ENCODE measurements at regions of chr13 and their contacts with region 1.

Region 1: DNA sequence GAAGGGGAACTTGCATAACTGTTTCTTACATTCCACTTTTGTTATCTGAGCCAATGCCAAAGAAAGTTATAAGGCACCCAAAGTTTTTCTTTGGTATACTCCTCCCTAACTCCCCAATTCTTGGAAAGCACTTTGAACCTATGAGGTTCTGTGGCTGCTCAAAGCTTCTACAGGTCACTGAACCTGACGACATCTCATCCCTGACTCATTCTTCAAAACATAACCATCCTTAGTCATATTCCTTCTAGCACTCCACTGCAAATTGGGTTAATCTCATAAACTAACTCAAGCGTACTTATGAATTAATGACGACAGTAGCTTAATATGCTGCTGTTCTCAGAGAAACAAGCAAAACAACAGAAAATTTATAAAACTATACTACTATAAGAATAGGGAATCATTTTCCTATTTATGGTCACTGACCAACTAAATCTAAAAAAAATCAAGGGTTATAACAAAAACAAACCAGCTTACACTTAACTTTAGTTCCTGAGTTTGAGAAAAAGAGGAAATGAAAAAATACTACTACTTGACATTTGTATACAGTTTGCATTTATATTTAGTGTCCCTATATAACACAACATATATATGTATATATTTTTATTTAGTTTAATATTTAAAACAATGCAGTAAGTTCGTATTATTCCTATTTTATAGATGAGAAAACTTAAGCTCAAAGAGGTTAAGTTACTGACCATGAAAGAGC is 69.1 kb downstream of the CAB39L start:
- DNase-seq: peak; percentile 23
- H3K4me3 ChIP-seq: peak overlapping the region; percentile 45
- H3K27ac ChIP-seq: peak overlapping the region; percentile 98
- H3K4me1 ChIP-seq: peaks cover 71% of the 10 kb centered on the region
- CTCF ChIP-seq: no peak

Region 2: GRCh38 chr13:49388256-49388655 is 13.5 kb after region 1 on chr13:
- CTCF ChIA-PET with region 1: interaction called, 4 read pairs
- POLR2A ChIA-PET with region 1: interaction called, 37 read pairs
- intact Hi-C with region 1: no loop called
- DNase-seq: no peak
- H3K4me3 ChIP-seq: no peak overlapping the region
- H3K27ac ChIP-seq: no peak overlapping the region
- H3K4me1 ChIP-seq: no peaks in the 10 kb centered on the region
- CTCF ChIP-seq: no peak

Region 3: GRCh38 chr13:49395451-49395865 is 20.7 kb after region 1 on chr13:
- CTCF ChIA-PET with region 1: no interaction called
- POLR2A ChIA-PET with region 1: interaction called, 35 read pairs
- intact Hi-C with region 1: no loop called
- DNase-seq: no peak
- H3K4me3 ChIP-seq: no peak overlapping the region
- H3K27ac ChIP-seq: no peak overlapping the region
- H3K4me1 ChIP-seq: peaks cover 24% of the 10 kb centered on the region
- CTCF ChIP-seq: no peak

Region 4: GRCh38 chr13:49400755-49401659 is 26.3 kb after region 1 on chr13:
- CTCF ChIA-PET with region 1: no interaction called
- POLR2A ChIA-PET with region 1: interaction called, 35 read pairs
- intact Hi-C with region 1: loop called (anchors 1 kb)
- DNase-seq: peak; percentile 87
- H3K4me3 ChIP-seq: peak overlapping the region; percentile 75
- H3K27ac ChIP-seq: peak overlapping the region; percentile 86
- H3K4me1 ChIP-seq: peaks cover 35% of the 10 kb centered on the region
- CTCF ChIP-seq: no peak

Region 5: GRCh38 chr13:49421391-49421790 is 46.7 kb after region 1 on chr13:
- CTCF ChIA-PET with region 1: no interaction called
- POLR2A ChIA-PET with region 1: interaction called, 12 read pairs
- intact Hi-C with region 1: loop called (anchors 5 kb)
- DNase-seq: peak; percentile 83
- H3K4me3 ChIP-seq: no peak overlapping the region
- H3K27ac ChIP-seq: no peak overlapping the region
- H3K4me1 ChIP-seq: peaks cover 54% of the 10 kb centered on the region
- CTCF ChIP-seq: peak; percentile 80

Measured in OCI-LY7 (cell line).